GM12878 (cell line): ENCODE measurements at regions of chrX and their contacts with region 1.

Region 1: GRCh38 chrX:13898083-13898482 is 81.2 kb upstream of the GPM6B start:
- DNase-seq: peak; percentile 13
- ATAC-seq: peak; percentile 98
- H3K4me3 ChIP-seq: no peak overlapping the region
- H3K27ac ChIP-seq: no peak overlapping the region
- H3K4me1 ChIP-seq: no peaks in the 10 kb centered on the region
- H3K27me3 ChIP-seq: no peaks in the 10 kb centered on the region; a peak in 2 of 4 replicates
- CTCF ChIP-seq: peak; percentile 57 to 66 (median 58)
- EP300 ChIP-seq: no peak
- POLR2A ChIP-seq: no peak
- RAD21 ChIP-seq: peak; percentile 70

Region 2: DNA sequence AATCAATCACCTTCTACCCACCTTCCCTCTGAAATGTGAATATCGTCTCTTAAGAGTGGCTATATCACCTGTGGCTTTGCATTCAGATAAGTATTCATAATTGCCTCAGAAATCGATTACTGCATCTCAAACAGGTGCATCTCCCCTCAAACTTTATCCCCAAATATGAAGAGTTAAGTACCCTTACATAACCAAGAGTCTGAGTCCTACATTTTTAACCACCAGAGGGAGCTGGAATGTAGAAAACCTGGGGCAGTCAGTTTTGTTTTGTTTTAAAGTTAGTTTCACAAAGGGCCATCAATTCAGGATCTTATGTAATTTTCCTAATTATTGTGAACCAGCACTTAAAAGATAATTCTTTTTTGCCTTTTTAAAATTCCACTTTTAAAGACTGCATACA is 239.5 kb before region 1 on chrX:
- CTCF ChIA-PET with region 1: no interaction called
- POLR2A ChIA-PET with region 1: no interaction called
- RAD21 ChIA-PET with region 1: interaction called, 3 read pairs
- SMC1A ChIA-PET with region 1: no interaction called
- in situ Hi-C with region 1: no loop called
- intact Hi-C with region 1: loop called (anchors 2 kb)
- DNase-seq: no peak
- ATAC-seq: peak; percentile 66
- H3K4me3 ChIP-seq: no peak overlapping the region
- H3K27ac ChIP-seq: peak overlapping the region; percentile 73
- H3K4me1 ChIP-seq: peaks cover 14% of the 10 kb centered on the region
- H3K27me3 ChIP-seq: no peaks in the 10 kb centered on the region
- CTCF ChIP-seq: peak; percentile 59 to 72 (median 68)
- EP300 ChIP-seq: no peak
- POLR2A ChIP-seq: no peak
- RAD21 ChIP-seq: peak; percentile 93

Region 3: DNA sequence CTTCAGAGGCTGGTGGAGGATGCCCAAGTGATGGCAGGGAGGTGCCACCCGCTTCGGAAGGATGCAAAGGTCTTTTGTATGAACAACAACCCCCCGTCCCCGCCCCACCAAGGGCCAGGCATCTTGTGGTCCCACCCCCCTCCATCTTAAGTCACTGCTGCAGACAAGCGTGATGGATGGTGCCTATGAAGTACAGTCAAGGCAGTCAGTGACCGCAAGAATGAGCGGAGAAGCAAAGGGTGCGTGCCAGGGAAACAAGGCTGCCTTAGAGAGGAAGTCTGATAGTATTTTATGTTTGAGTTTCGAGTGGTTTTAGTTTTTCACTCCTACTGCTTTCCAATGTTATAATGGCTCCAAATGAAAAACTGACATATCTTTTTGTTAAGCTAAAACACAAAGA is 12.5 kb before region 1 on chrX:
- CTCF ChIA-PET with region 1: no interaction called
- POLR2A ChIA-PET with region 1: no interaction called
- RAD21 ChIA-PET with region 1: no interaction called
- SMC1A ChIA-PET with region 1: no interaction called
- in situ Hi-C with region 1: no loop called
- intact Hi-C with region 1: no loop called
- DNase-seq: no peak
- ATAC-seq: no peak
- H3K4me3 ChIP-seq: no peak overlapping the region
- H3K27ac ChIP-seq: no peak overlapping the region
- H3K4me1 ChIP-seq: no peaks in the 10 kb centered on the region
- H3K27me3 ChIP-seq: no peaks in the 10 kb centered on the region
- CTCF ChIP-seq: no peak
- EP300 ChIP-seq: no peak
- POLR2A ChIP-seq: no peak
- RAD21 ChIP-seq: no peak

Region 4: GRCh38 chrX:14084466-14084865 is 186.4 kb after region 1 on chrX:
- CTCF ChIA-PET with region 1: no interaction called
- POLR2A ChIA-PET with region 1: no interaction called
- RAD21 ChIA-PET with region 1: no interaction called
- SMC1A ChIA-PET with region 1: no interaction called
- in situ Hi-C with region 1: no loop called
- intact Hi-C with region 1: no loop called
- DNase-seq: no peak
- ATAC-seq: no peak
- H3K4me3 ChIP-seq: no peak overlapping the region
- H3K27ac ChIP-seq: no peak overlapping the region
- H3K4me1 ChIP-seq: no peaks in the 10 kb centered on the region
- H3K27me3 ChIP-seq: no peaks in the 10 kb centered on the region; a peak in 1 of 4 replicates
- CTCF ChIP-seq: no peak
- EP300 ChIP-seq: no peak
- POLR2A ChIP-seq: no peak
- RAD21 ChIP-seq: no peak